ENCODE measurements at regions of chr19 and their contacts with region 1.

Region 1: GRCh38 chr19:19540715-19541440 is 2.8 kb downstream of the CILP2 start:
- DNase-seq: peak; percentile 67
- H3K4me3 Mint-ChIP-seq: peak overlapping the region; percentile 72
- H3K27ac Mint-ChIP-seq: no peak overlapping the region
- H3K4me1 Mint-ChIP-seq: peaks cover 27% of the 10 kb centered on the region
- H3K27me3 Mint-ChIP-seq: peaks cover 18% of the 10 kb centered on the region

Region 2: DNA sequence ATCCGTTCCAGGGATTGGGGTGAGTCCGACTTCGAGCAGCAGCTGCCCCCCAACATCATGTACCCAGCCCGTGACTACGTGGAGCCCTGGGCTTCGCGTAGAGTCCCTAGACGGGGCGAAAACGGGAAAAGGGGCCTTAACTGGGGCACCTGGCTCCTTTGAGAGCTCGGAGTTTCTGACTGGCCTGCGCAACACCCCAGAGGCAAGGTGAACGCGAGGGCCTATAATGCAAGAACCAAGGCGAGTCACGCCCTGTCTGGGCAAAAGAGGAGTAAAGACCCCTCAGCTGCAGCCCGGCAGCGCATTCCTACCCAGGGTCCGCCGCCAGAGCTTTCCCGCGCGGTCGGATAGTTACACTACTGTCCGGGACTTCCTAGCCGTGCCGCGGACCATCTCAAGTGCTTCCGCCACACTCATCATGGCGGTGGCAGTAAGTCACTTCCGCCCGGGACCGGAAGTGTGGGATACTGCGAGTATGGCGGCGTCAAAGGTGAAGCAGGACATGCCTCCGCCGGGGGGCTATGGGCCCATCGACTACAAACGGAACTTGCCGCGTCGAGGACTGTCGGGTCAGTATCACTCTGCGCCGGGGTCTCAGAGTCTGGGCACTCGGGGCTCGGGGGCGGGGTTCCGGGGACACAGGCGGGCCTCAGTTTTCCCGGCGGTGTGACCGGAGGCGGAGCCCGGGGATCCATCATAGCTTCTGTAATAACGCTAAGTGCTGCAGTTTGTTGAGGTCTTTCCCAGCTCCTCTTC is 24.9 kb before region 1 on chr19 and contains the start of gene NDUFA13:
- intact Hi-C with region 1: loop called (anchors 1 kb)
- DNase-seq: peak; percentile 93
- H3K4me3 Mint-ChIP-seq: peak within 1 kb of the TSS; percentile 92
- H3K27ac Mint-ChIP-seq: peak within 1 kb of the TSS; percentile 94
- H3K4me1 Mint-ChIP-seq: peaks cover 9% of the 10 kb centered on the region
- H3K27me3 Mint-ChIP-seq: no peaks in the 10 kb centered on the region
- total RNA-seq, gene NDUFA13: 408 and 410 TPM in 2 replicates

Region 3: GRCh38 chr19:19591133-19591825 is 50.4 kb after region 1 on chr19:
- intact Hi-C with region 1: loop called (anchors 2 kb)
- DNase-seq: peak; percentile 75
- H3K4me3 Mint-ChIP-seq: peak overlapping the region; percentile 74
- H3K27ac Mint-ChIP-seq: peak overlapping the region; percentile 97
- H3K4me1 Mint-ChIP-seq: peaks cover 77% of the 10 kb centered on the region
- H3K27me3 Mint-ChIP-seq: no peaks in the 10 kb centered on the region

Region 4: GRCh38 chr19:19597809-19598306 is 57.0 kb after region 1 on chr19:
- intact Hi-C with region 1: loop called (anchors 2 kb)
- DNase-seq: peak; percentile 73
- H3K4me3 Mint-ChIP-seq: peak overlapping the region; percentile 79
- H3K27ac Mint-ChIP-seq: peak overlapping the region; percentile 99
- H3K4me1 Mint-ChIP-seq: peaks cover 69% of the 10 kb centered on the region
- H3K27me3 Mint-ChIP-seq: no peaks in the 10 kb centered on the region

Measured in activated T-helper 1 cell treated with anti-CD3 and anti-CD28 coated beads, Interleukin-12 subunit alpha, Interleukin-12 subunit beta, Interleukin-2, Interleukin-4 antibody, amounts not matched to agents 30 ng/mL and 10 ng/mL and 1 ng/mL, durations not matched to agents 14 hours and 24 hours and 36 hours (primary cell).